ENCODE measurements at regions of chr19 and their contacts with region 1.

Region 1: DNA sequence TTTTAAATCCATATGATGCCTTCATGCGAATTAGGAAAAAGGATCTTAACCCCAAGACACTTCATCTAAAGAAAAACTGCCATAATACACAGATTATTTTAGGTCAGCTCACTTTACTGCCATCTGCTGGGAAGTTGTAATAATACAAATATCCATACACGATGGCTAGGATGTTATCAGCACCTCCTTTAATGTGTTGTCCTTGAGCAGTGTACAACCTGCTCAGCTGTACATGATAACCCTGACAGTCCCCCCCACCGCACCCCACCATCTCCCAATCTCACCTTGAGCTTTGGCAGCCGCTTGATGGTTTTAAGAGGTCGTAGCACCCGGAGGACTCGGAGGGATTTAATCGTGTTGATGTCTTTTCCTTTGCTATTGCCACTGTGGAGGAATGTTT is 112.2 kb downstream of the IER2 start:
- DNase-seq: peak; percentile 57 to 73 (median 66)
- ATAC-seq: peak; percentile 88
- H3K4me3 ChIP-seq: no peak overlapping the region
- H3K27ac ChIP-seq: no peak overlapping the region
- H3K4me1 ChIP-seq: peaks cover 3 to 10% of the 10 kb centered on the region in 2 experiments; a peak in 3 of 5 replicates
- H3K27me3 ChIP-seq: peaks cover 22 to 41% of the 10 kb centered on the region in 2 experiments
- CTCF ChIP-seq: peak; percentile 60 to 74 (median 61); a peak in 5 of 6 replicates
- EP300 ChIP-seq: no peak
- POLR2A ChIP-seq: no peak
- RAD21 ChIP-seq: peak; percentile 64 to 76

Region 2: GRCh38 chr19:13099073-13099999 is 163.1 kb before region 1 on chr19:
- CTCF ChIA-PET with region 1: interaction called, 5 read pairs
- POLR2A ChIA-PET with region 1: no interaction called
- in situ Hi-C with region 1: no loop called
- intact Hi-C with region 1: loop called (anchors 1 kb)
- DNase-seq: peak; percentile 45 to 88 (median 60)
- ATAC-seq: peak; percentile 10
- H3K4me3 ChIP-seq: peak overlapping the region; percentile 98
- H3K27ac ChIP-seq: peak overlapping the region; percentile 98
- H3K4me1 ChIP-seq: peaks cover 42 to 82% of the 10 kb centered on the region in 2 experiments
- H3K27me3 ChIP-seq: no peaks in the 10 kb centered on the region
- CTCF ChIP-seq: no peak
- EP300 ChIP-seq: no peak
- POLR2A ChIP-seq: no peak
- RAD21 ChIP-seq: no peak; a peak in 1 of 4 replicates

Region 3: GRCh38 chr19:13195678-13196077 is 66.8 kb before region 1 on chr19:
- CTCF ChIA-PET with region 1: interaction called, 16 read pairs
- POLR2A ChIA-PET with region 1: no interaction called
- in situ Hi-C with region 1: no loop called
- intact Hi-C with region 1: loop called (anchors 2 kb)
- DNase-seq: peak; percentile 50 to 72 (median 55)
- ATAC-seq: peak; percentile 77
- H3K4me3 ChIP-seq: no peak overlapping the region
- H3K27ac ChIP-seq: no peak overlapping the region
- H3K4me1 ChIP-seq: peaks cover 6% of the 10 kb centered on the region in 2 experiments; a peak in 3 of 5 replicates
- H3K27me3 ChIP-seq: no peaks in the 10 kb centered on the region; a peak in 1 of 5 replicates
- CTCF ChIP-seq: peak; percentile 54 to 96 (median 72); a peak in 5 of 6 replicates
- EP300 ChIP-seq: no peak
- POLR2A ChIP-seq: no peak
- RAD21 ChIP-seq: peak in 1 of 2 experiments; percentile 39; a peak in 1 of 4 replicates

Region 4: GRCh38 chr19:13234518-13234917 is 27.9 kb before region 1 on chr19:
- CTCF ChIA-PET with region 1: no interaction called
- POLR2A ChIA-PET with region 1: no interaction called
- in situ Hi-C with region 1: no loop called
- intact Hi-C with region 1: no loop called
- DNase-seq: peak; percentile 88 to 92 (median 92)
- ATAC-seq: peak; percentile 99
- H3K4me3 ChIP-seq: no peak overlapping the region
- H3K27ac ChIP-seq: no peak overlapping the region
- H3K4me1 ChIP-seq: peaks cover 6 to 19% of the 10 kb centered on the region in 2 experiments; a peak in 4 of 5 replicates
- H3K27me3 ChIP-seq: peaks cover 0 to 40% of the 10 kb centered on the region in 2 experiments; a peak in 3 of 5 replicates
- CTCF ChIP-seq: peak; percentile 95 to 99 (median 98)
- EP300 ChIP-seq: no peak
- POLR2A ChIP-seq: no peak
- RAD21 ChIP-seq: peak; percentile 32 to 70

Region 5: GRCh38 chr19:13366529-13367143 is 104.2 kb after region 1 on chr19:
- CTCF ChIA-PET with region 1: no interaction called
- POLR2A ChIA-PET with region 1: no interaction called
- in situ Hi-C with region 1: no loop called
- intact Hi-C with region 1: no loop called
- DNase-seq: peak; percentile 51 to 61 (median 54)
- ATAC-seq: peak; percentile 86
- H3K4me3 ChIP-seq: no peak overlapping the region
- H3K27ac ChIP-seq: no peak overlapping the region
- H3K4me1 ChIP-seq: no peaks in the 10 kb centered on the region
- H3K27me3 ChIP-seq: peaks cover 6 to 26% of the 10 kb centered on the region in 2 experiments; a peak in 4 of 5 replicates
- CTCF ChIP-seq: peak; percentile 70 to 87 (median 84)
- EP300 ChIP-seq: no peak
- POLR2A ChIP-seq: no peak
- RAD21 ChIP-seq: peak; percentile 35 to 66

Region 6: DNA sequence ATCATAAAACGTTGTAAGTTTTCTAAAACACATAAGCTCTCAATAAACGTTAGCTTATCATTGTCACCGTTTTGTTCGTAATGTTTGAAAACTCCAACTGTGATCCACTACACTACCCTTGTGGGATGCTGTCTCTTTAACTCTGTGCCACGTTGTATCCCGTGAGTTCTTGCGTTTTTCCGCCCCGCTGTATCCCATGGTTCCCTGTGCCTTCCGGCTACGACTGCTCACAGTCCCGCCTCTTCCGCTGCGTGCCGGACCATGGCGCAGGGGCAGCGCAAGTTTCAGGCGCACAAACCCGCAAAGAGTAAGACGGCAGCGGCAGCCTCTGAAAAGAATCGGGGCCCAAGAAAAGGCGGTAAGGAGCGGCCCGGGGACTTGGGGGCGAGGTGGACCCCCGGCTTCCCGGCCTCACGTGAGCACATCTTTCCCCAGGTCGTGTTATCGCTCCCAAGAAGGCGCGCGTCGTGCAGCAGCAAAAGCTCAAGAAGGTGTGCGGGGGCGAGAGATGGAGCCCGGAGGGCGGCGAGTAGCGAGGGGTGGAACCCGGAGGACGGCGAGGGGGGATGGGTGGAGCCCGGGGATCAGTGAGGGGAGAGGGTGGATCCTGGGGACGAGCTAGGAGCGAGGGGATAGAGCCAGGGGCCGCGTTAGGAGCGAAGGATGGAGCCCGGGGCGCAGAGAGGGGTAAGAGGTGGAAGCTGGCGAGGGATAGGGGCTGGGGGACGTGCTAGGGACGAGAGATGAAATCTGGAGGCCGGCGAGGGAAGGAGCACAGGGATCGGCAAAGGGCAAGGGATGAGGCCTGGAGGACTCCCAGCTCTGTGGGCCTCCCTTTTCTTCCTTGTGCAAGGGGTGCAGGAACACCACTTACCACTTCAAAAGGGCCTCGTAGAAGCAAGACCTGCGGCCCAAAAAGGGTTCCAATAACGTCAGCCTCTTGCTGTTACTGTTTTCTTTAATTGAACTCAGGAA is 512.1 kb after region 1 on chr19 and contains the start of gene C19orf53:
- CTCF ChIA-PET with region 1: no interaction called
- POLR2A ChIA-PET with region 1: no interaction called
- in situ Hi-C with region 1: no loop called
- intact Hi-C with region 1: no loop called
- DNase-seq: peak; percentile 91 to 97 (median 96)
- ATAC-seq: peak; percentile 100
- H3K4me3 ChIP-seq: peak within 1 kb of the TSS; percentile 90
- H3K27ac ChIP-seq: peak within 1 kb of the TSS; percentile 86
- H3K4me1 ChIP-seq: peaks cover 10 to 20% of the 10 kb centered on the region in 2 experiments
- H3K27me3 ChIP-seq: no peaks in the 10 kb centered on the region
- CTCF ChIP-seq: no peak; a peak in 1 of 6 replicates
- EP300 ChIP-seq: no peak
- POLR2A ChIP-seq: peak; percentile 99
- RAD21 ChIP-seq: no peak
- polyA plus RNA-seq, gene C19orf53: 416 to 441 TPM